ENCODE measurements at regions of chr1 and their contacts with region 1.

Region 1: DNA sequence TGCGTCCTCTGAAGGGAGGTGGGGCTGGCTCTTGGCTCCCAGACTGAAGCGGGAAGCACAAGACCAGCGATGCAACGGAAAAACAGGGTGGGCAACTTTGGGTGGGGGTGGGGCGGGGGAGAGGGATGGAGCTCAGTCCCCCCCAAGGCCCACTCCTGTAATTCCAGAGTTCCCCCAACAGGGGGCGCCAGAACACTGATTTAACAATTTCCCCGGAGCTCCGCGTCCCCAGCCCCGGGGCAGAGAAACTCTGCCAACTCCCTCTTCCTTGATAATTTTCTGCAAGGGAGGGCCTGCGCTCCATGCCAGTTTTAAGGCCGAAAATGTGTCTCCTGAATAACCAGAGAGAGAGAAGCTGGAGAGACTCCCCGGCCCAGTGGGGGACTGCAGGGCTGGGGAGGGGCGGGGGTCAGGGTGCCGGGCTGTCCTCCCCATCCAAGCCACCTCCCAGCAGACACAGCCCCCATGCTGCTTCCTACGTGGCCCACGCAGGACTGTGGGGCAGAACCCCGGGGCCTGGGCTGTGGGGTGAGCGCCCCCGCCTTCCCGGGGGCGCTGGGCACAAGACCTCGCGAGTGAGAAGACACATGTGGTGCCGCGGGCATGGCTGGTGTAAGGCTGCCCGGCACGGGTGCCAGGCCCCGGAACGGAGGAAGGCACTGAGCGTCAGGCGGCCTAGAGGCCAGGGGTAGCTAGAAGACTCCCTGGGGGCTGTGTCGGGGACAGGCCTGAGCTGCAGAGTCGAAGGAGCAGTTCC is 51.4 kb downstream of the KIF21B start:
- DNase-seq: peak; percentile 49 to 83 (median 66)
- ATAC-seq: peak; percentile 67
- H3K4me3 ChIP-seq: no peak overlapping the region
- H3K4me3 Mint-ChIP-seq: no peak overlapping the region
- H3K27ac ChIP-seq: no peak overlapping the region
- H3K27ac Mint-ChIP-seq: no peak overlapping the region
- H3K4me1 ChIP-seq: no peaks in the 10 kb centered on the region
- H3K4me1 Mint-ChIP-seq: no peaks in the 10 kb centered on the region
- H3K27me3 ChIP-seq: no peaks in the 10 kb centered on the region
- H3K27me3 Mint-ChIP-seq: no peaks in the 10 kb centered on the region
- CTCF ChIP-seq: peak; percentile 97

Region 2: GRCh38 chr1:200780545-200781369 is 191.4 kb before region 1 on chr1:
- CTCF ChIA-PET with region 1: no interaction called
- POLR2A ChIA-PET with region 1: no interaction called
- intact Hi-C with region 1: no loop called
- DNase-seq: no peak
- ATAC-seq: no peak
- H3K4me3 ChIP-seq: no peak overlapping the region
- H3K4me3 Mint-ChIP-seq: no peak overlapping the region
- H3K27ac ChIP-seq: no peak overlapping the region
- H3K27ac Mint-ChIP-seq: no peak overlapping the region
- H3K4me1 ChIP-seq: no peaks in the 10 kb centered on the region
- H3K4me1 Mint-ChIP-seq: no peaks in the 10 kb centered on the region
- H3K27me3 ChIP-seq: no peaks in the 10 kb centered on the region
- H3K27me3 Mint-ChIP-seq: no peaks in the 10 kb centered on the region
- CTCF ChIP-seq: no peak

Region 3: DNA sequence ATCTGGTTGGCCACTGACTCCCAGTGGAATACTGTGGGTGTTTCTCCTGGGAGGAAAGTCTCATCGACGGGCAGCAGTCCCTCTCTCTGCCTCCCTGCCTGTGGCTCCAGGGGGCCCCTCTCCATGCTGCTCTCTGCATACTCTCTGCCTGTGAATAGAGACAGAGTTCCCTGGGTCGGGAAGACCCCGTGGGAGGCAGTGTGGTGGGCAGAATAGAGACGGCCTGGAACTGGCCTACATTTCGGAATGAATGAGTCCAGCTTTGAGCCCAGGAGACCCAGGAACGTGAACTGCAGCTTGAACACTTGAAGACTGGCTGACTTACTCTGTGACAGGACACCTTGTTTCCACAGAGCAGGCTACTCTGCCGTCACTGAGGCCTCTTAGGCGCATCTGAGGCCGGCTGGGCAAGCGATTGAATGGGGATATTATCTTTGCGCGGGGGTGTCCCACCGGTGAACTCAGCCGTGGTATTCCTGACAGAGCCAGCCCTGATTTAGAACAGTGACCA is 12.7 kb before region 1 on chr1:
- CTCF ChIA-PET with region 1: interaction called, 14 read pairs
- POLR2A ChIA-PET with region 1: no interaction called
- intact Hi-C with region 1: no loop called
- DNase-seq: no peak
- ATAC-seq: no peak
- H3K4me3 ChIP-seq: no peak overlapping the region
- H3K4me3 Mint-ChIP-seq: no peak overlapping the region
- H3K27ac ChIP-seq: no peak overlapping the region
- H3K27ac Mint-ChIP-seq: no peak overlapping the region
- H3K4me1 ChIP-seq: no peaks in the 10 kb centered on the region
- H3K4me1 Mint-ChIP-seq: no peaks in the 10 kb centered on the region
- H3K27me3 ChIP-seq: peaks cover 0 to 3% of the 10 kb centered on the region in 2 experiments
- H3K27me3 Mint-ChIP-seq: peaks cover 5% of the 10 kb centered on the region
- CTCF ChIP-seq: no peak

Region 4: GRCh38 chr1:201016211-201016651 is 44.1 kb after region 1 on chr1:
- CTCF ChIA-PET with region 1: interaction called, 69 read pairs
- POLR2A ChIA-PET with region 1: no interaction called
- intact Hi-C with region 1: loop called in 1 of 2 experiments (anchors 1 kb)
- DNase-seq: no peak
- ATAC-seq: no peak
- H3K4me3 ChIP-seq: no peak overlapping the region
- H3K4me3 Mint-ChIP-seq: peak overlapping the region; percentile 46
- H3K27ac ChIP-seq: peak overlapping the region in 1 of 2 experiments; percentile 17
- H3K27ac Mint-ChIP-seq: no peak overlapping the region
- H3K4me1 ChIP-seq: peaks cover 98% of the 10 kb centered on the region
- H3K4me1 Mint-ChIP-seq: peaks cover 95% of the 10 kb centered on the region
- H3K27me3 ChIP-seq: no peaks in the 10 kb centered on the region
- H3K27me3 Mint-ChIP-seq: no peaks in the 10 kb centered on the region
- CTCF ChIP-seq: no peak

Region 5: DNA sequence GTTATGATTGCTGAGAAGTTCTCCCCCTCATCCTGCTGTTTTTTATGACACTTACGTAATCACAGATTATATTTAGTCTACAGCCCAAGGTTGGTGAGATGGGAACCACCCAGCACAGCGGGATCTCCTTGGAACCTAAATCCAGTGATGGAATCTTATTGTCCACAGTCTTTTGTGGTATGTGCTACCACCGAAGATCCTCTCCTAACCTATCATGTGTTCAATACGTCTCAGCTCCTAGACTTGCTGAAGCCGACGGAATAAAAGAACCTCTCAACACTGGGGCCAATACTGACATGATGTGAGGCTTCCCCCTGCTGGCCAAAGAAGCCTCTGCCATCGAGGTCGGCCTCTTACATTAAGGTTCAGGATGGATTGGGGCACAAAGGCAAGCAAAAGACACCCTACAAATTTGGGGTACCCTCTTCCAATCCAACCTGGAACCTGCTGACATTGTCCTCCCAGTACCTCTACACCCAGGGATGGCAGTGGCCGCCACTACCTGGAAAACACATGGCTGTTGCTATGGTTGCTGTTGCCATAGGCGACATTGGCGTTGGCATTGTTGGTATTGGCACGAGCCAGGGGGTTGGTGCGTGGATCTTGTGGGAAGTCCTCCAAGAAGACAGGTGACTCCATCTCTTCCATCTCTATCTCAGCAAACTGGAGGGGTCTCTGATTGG is 70.8 kb after region 1 on chr1:
- CTCF ChIA-PET with region 1: interaction called, 275 read pairs
- POLR2A ChIA-PET with region 1: no interaction called
- intact Hi-C with region 1: loop called (anchors 1 kb)
- DNase-seq: peak; percentile 49 to 84 (median 73)
- ATAC-seq: peak; percentile 98
- H3K4me3 ChIP-seq: no peak overlapping the region
- H3K4me3 Mint-ChIP-seq: no peak overlapping the region
- H3K27ac ChIP-seq: no peak overlapping the region
- H3K27ac Mint-ChIP-seq: no peak overlapping the region
- H3K4me1 ChIP-seq: no peaks in the 10 kb centered on the region
- H3K4me1 Mint-ChIP-seq: peaks cover 3% of the 10 kb centered on the region
- H3K27me3 ChIP-seq: no peaks in the 10 kb centered on the region
- H3K27me3 Mint-ChIP-seq: no peaks in the 10 kb centered on the region
- CTCF ChIP-seq: peak; percentile 81

Region 6: DNA sequence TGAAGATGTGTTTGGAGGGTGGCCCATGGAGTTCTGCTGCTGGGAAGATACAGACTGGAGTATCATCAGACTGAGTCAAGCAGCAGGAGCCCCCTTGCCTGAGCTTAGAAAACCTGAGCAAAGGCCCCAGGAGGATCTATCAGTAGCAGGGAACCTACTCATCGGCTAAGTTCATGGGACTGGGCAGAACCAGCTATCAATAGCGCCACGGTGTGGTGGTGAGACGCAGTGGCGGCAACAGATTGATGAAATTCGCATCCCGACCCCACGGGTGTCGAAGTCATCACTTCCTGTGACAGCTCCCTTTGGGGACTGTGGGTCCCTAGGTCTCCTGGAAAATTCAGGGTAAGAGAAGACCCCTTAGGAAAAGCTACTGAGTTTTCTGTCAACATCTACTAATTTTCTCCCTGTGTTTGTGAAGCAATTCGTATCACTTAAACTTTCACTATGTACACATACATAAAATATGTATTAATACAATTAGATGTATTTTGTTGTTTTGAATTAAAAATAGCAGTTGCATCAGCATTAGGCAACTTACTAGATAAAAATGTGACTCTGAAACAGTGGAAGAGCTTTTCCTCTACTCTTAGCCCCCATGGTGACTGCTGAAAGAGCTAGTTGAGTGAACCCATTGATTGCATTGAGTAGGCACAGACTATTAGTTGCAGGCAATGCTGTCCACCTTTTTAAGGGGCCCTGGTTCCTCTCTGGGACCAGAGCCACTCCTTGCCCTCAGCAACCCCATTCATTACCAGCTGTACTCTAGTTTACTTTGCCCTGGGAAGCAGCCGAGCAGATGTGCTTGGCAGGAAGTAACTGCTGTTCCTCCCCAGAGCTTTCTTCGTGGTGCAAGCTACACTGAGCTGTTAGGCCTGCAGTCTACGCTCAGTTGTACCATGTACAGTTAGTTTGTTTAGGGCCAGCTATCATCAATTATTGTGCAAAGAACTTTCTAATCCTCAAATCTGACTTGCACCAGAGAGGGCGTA is 147.4 kb after region 1 on chr1:
- CTCF ChIA-PET with region 1: interaction called, 30 read pairs
- POLR2A ChIA-PET with region 1: interaction called, 3 read pairs
- intact Hi-C with region 1: loop called (anchors 1 to 2 kb)
- DNase-seq: peak; percentile 17 to 73 (median 54)
- ATAC-seq: peak; percentile 44
- H3K4me3 ChIP-seq: no peak overlapping the region
- H3K4me3 Mint-ChIP-seq: no peak overlapping the region
- H3K27ac ChIP-seq: no peak overlapping the region
- H3K27ac Mint-ChIP-seq: no peak overlapping the region
- H3K4me1 ChIP-seq: peaks cover 13% of the 10 kb centered on the region
- H3K4me1 Mint-ChIP-seq: peaks cover 25% of the 10 kb centered on the region
- H3K27me3 ChIP-seq: no peaks in the 10 kb centered on the region
- H3K27me3 Mint-ChIP-seq: peaks cover 8% of the 10 kb centered on the region
- CTCF ChIP-seq: peak; percentile 64

Region 7: GRCh38 chr1:202063100-202063499 is 1091.0 kb after region 1 on chr1:
- CTCF ChIA-PET with region 1: no interaction called
- POLR2A ChIA-PET with region 1: no interaction called
- intact Hi-C with region 1: no loop called
- DNase-seq: no peak
- ATAC-seq: no peak
- H3K4me3 ChIP-seq: no peak overlapping the region
- H3K4me3 Mint-ChIP-seq: no peak overlapping the region
- H3K27ac ChIP-seq: no peak overlapping the region
- H3K27ac Mint-ChIP-seq: no peak overlapping the region
- H3K4me1 ChIP-seq: no peaks in the 10 kb centered on the region
- H3K4me1 Mint-ChIP-seq: no peaks in the 10 kb centered on the region
- H3K27me3 ChIP-seq: peaks cover 0 to 3% of the 10 kb centered on the region in 2 experiments
- H3K27me3 Mint-ChIP-seq: peaks cover 19% of the 10 kb centered on the region
- CTCF ChIP-seq: no peak